ENCODE measurements at regions of chr12 and their contacts with region 1.

Region 1: DNA sequence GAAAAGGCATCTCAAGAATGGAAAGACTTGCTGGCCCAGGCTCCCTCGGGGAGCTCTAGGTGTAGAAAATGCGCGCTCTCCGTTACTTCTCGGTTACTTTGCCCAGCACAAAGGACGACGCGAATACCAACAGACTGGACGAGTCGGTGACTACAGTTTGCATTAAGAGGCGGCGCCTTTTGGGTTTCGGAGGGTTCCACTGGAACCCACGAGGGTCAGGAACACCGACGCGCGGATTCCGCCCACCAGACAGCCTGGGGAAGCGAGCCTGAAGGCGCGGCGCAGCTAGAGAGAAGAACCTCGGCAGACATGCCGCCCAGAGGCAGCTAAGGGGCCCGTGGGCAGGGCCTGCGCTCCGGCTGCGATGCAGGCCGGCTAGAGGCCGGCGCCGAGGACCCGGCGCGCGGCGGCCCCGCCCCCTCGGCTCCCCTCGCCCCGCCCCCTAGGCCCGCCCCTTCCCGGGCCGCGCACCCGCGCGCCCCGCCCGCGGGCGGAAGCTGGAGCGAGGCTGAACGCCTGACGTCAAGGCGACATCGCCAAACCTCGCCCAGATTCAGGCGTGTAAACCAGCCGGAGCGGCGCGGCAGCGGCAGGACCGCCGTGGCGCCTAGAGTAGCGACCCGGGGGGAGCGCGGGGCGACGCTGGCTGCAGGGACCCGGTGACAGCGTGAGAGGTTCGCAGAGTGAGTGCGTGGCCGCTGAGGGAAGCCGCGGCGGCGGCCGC is at the start of gene RAP1B:
- DNase-seq: peak; percentile 87
- H3K4me3 ChIP-seq: peak within 1 kb of the TSS; percentile 90 to 97 (median 96)
- H3K27ac ChIP-seq: peak within 1 kb of the TSS; percentile 90
- H3K4me1 ChIP-seq: peaks cover 35% of the 10 kb centered on the region
- H3K27me3 ChIP-seq: no peaks in the 10 kb centered on the region
- CTCF ChIP-seq: no peak
- POLR2A ChIP-seq: peak; percentile 95
- total RNA-seq, gene RAP1B: 174 and 186 TPM in 2 replicates

Region 2: DNA sequence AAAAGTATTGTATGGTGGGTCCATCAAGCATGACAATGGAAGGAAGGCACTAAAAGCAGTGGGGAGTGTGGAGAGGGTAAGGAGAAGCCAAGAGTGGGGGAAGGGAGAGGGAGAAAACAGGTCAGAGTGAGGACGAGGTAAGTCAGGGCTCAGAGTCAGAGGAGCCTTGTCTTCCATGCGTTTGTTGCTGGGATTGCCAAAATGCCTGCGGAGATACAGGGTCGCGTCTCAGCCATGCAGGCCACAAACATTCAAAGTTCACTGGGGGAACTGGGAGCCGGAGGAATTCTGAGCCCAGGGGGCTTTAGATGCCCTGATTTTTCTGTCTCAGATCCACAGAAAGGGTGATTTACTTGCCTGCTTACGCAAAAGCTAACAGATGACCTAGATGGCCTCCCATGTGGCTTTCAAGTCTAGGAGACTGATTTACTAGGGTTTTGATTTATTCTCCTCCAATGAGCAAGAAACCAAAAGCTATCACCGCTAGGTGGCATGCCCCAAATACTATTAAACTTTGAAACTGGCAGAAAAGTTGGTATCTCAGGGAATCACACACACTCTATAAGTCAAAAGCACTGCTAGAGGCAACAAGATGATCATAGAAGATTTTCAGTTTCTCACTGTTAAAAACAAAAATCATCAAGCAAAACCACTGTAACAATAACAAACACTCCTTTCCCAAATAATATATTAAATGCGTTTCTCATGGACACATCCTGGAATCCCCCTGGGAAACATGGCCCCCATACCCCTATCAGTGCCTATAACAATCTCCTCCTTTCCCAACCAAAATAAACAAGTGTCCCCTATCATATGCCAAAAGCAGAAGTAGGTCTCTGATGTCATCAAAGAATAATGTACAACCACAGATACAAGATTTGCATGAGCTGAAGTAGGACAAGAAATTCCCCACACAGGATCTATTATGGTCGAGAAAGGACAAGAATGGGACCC is 251.7 kb before region 1 on chr12:
- CTCF ChIA-PET with region 1: interaction called, 21 read pairs
- POLR2A ChIA-PET with region 1: no interaction called
- dilution Hi-C with region 1: no loop called
- intact Hi-C with region 1: no loop called
- DNase-seq: peak; percentile 83
- H3K4me3 ChIP-seq: no peak overlapping the region
- H3K27ac ChIP-seq: no peak overlapping the region
- H3K4me1 ChIP-seq: no peaks in the 10 kb centered on the region
- H3K27me3 ChIP-seq: no peaks in the 10 kb centered on the region
- CTCF ChIP-seq: peak; percentile 45 to 58
- POLR2A ChIP-seq: no peak

Region 3: GRCh38 chr12:68455691-68456345 is 154.7 kb before region 1 on chr12:
- CTCF ChIA-PET with region 1: no interaction called
- POLR2A ChIA-PET with region 1: no interaction called
- dilution Hi-C with region 1: no loop called
- intact Hi-C with region 1: loop called (anchors 1 kb)
- DNase-seq: peak; percentile 40
- H3K4me3 ChIP-seq: no peak overlapping the region
- H3K27ac ChIP-seq: no peak overlapping the region
- H3K4me1 ChIP-seq: peaks cover 18% of the 10 kb centered on the region
- H3K27me3 ChIP-seq: peaks cover 0 to 2% of the 10 kb centered on the region in 2 experiments
- CTCF ChIP-seq: no peak
- POLR2A ChIP-seq: no peak

Region 4: GRCh38 chr12:68565375-68565903 is 45.1 kb before region 1 on chr12:
- CTCF ChIA-PET with region 1: interaction called, 5 read pairs
- POLR2A ChIA-PET with region 1: interaction called, 4 read pairs
- dilution Hi-C with region 1: no loop called
- intact Hi-C with region 1: loop called (anchors 5 kb)
- DNase-seq: peak; percentile 86
- H3K4me3 ChIP-seq: no peak overlapping the region
- H3K27ac ChIP-seq: no peak overlapping the region
- H3K4me1 ChIP-seq: peaks cover 14% of the 10 kb centered on the region
- H3K27me3 ChIP-seq: peaks cover 0 to 2% of the 10 kb centered on the region in 2 experiments
- CTCF ChIP-seq: no peak
- POLR2A ChIP-seq: no peak

Region 5: GRCh38 chr12:68630050-68630449 is 19.5 kb after region 1 on chr12:
- CTCF ChIA-PET with region 1: no interaction called
- POLR2A ChIA-PET with region 1: no interaction called
- dilution Hi-C with region 1: no loop called
- intact Hi-C with region 1: no loop called
- DNase-seq: no peak
- H3K4me3 ChIP-seq: no peak overlapping the region
- H3K27ac ChIP-seq: no peak overlapping the region
- H3K4me1 ChIP-seq: peaks cover 13% of the 10 kb centered on the region
- H3K27me3 ChIP-seq: no peaks in the 10 kb centered on the region
- CTCF ChIP-seq: no peak
- POLR2A ChIP-seq: no peak

Region 6: DNA sequence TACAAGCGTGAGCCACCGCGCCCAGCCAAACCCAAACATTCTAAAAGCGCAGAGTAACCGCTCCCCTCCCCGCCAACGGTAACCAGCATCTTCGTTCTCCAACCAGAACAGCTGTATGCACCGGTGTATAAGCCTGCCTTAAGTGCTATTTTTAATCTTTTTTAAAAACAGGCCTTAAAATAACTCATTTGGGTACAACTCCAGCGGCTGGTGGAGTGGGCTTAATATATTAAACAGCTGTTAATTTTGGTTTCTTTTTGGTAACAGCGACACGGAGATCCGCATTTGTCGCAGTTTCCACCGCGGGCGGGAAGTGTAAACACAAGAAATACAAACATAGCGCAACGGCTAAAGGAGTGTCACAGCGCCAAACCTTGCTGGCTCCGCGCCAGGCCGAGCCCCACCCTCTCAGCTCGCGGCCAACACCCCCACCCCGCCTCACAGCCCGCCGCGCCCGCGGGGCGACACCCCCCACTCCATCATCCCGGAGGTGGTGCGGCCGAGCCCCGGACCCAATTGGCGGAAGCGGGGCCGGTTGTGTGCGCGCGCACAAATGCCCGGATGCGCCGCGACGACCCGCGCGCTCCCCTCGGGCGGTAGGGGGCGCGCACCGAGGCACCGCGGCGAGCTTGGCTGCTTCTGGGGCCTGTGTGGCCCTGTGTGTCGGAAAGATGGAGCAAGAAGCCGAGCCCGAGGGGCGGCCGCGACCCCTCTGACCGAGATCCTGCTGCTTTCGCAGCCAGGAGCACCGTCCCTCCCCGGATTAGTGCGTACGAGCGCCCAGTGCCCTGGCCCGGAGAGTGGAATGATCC is 197.2 kb after region 1 on chr12 and contains the start of gene MDM2:
- CTCF ChIA-PET with region 1: no interaction called
- POLR2A ChIA-PET with region 1: no interaction called
- dilution Hi-C with region 1: no loop called
- intact Hi-C with region 1: loop called (anchors 5 kb)
- DNase-seq: peak; percentile 88
- H3K4me3 ChIP-seq: peak within 1 kb of the TSS; percentile 57 to 82 (median 68)
- H3K27ac ChIP-seq: peak within 1 kb of the TSS; percentile 82
- H3K4me1 ChIP-seq: peaks cover 3% of the 10 kb centered on the region
- H3K27me3 ChIP-seq: no peaks in the 10 kb centered on the region
- CTCF ChIP-seq: peak; percentile 83 to 87
- POLR2A ChIP-seq: peak; percentile 73
- total RNA-seq, gene MDM2: 270 and 276 TPM in 2 replicates

Measured in endothelial cell of umbilical vein (primary cell).